Mammary epithelial cell (primary cell): ENCODE measurements at regions of chr1 and their contacts with region 1.

Region 1: DNA sequence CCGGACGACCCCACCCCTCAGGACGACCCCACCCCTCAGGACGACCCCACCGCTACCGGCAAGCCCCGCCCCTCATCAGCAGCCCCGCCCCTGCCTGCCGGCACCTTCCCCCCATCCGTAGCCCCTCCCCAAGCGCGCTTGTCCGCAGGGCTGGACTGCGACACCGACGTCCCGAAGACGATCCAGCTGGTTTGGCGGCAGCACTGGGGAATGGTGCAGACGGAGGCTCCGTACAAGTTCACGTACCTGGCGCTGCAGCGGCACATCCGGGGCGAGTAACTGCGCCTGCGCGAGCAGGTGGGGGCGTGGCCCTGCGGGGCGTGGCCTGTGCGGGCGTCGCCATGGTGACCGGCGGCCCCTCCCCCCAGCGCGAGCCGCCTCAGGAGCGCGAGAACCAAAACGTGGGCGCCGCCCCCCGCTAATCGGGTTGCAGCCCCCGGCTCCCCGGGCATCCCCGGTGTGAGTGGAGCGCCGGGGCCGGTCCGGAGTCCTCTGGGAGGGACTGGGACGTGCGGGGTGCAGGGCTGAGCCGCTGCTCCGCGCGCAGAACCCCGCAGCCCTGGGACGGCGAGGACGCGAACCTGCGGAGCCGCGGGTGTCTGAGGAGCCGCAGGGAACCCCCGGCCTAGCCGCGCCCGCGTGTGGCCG is 4.9 kb downstream of the RNF223 start:
- DNase-seq: peak; percentile 69
- H3K4me3 ChIP-seq: peak overlapping the region in 2 of 3 experiments; percentile 50 to 69
- H3K27ac ChIP-seq: no peak overlapping the region
- H3K4me1 ChIP-seq: peaks cover 25% of the 10 kb centered on the region
- H3K27me3 ChIP-seq: no peaks in the 10 kb centered on the region
- CTCF ChIP-seq: no peak

Region 2: DNA sequence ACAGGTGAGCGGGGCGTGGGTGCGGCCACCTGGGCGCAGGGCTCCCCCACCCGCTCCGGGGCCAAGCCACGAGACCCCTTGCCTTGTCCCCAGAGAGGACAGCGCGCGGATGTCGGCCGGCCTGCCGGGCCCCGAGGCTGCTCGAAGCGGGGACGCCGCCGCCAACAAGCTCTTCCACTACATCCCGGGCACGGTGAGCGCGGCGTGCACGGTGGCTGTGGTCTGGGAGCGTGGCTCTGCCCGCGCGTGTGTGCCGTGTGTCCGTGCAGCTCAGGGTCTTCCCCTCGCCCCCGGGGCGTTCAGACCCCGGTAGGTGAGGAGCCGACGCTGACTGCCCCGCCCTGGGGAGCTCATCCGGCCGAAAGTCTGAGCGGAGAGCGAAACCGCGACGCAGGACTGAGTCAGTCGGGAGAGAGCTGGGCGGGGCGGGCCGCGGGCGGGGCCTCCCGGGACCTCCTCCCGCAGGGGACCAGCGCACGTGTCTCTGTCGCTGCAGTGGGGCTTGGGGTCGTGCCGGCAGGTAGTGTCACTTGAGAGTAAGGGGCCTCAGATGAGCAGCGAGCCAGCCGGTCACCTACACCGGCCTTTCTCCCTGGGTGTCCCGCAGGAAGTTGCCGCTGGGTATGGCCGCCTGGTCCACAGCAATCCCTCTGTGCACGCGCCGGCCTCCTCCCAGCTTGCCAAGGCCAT is 102.4 kb before region 1 on chr1:
- CTCF ChIA-PET with region 1: no interaction called
- dilution Hi-C with region 1: loop called (anchors 5 kb)
- in situ Hi-C with region 1: no loop called
- intact Hi-C with region 1: no loop called
- DNase-seq: peak; percentile 90
- H3K4me3 ChIP-seq: peak overlapping the region; percentile 43 to 70 (median 59)
- H3K27ac ChIP-seq: peak overlapping the region; percentile 97
- H3K4me1 ChIP-seq: peaks cover 29% of the 10 kb centered on the region
- H3K27me3 ChIP-seq: no peaks in the 10 kb centered on the region
- CTCF ChIP-seq: no peak

Region 3: DNA sequence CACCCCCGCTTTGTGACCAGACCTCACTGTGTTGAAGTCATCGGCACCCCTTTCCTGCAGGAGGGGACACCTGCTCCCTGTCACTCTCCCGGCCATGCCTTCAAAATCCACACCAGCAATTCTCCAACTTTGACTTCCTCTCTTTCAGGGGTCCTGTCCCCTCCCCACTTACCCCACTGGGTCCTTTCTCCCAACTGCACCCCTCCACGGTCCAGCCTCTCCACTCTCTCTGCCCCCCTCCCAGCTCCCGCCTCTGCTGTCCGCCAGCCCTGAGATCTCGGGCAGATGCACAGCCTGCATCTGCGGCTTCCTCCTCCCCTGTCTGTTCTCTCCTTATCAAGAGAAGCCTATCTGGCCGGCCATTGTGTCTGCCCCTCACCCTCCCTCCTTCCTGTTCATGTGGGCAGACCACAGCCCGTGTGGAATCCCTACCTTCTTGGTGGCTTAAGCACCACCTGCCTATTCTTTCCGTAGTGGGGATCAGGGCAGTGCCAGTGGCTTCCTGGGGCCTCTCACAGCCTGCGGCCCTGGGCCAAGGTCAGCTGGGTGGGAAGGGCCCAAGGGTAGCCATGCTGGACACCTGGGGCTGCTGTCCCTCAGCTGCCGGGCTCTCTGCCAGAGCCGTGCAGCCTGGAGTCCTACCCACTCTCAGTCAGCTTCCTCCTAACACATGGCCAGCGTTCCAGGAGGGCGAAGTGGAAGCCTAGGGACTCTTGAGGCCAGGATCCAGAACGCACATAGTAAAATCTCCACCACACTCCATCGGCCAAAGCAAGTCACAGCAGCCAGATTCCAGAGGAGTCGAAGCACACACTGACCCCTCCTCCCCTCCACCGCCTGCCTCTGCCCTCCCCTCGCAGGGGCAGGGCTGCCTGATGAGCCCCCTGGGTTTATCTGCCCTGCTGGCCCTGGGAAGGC is 64.1 kb before region 1 on chr1:
- CTCF ChIA-PET with region 1: interaction called, 4 read pairs
- dilution Hi-C with region 1: loop called (anchors 5 kb)
- in situ Hi-C with region 1: no loop called
- intact Hi-C with region 1: no loop called
- DNase-seq: no peak
- H3K4me3 ChIP-seq: no peak overlapping the region
- H3K27ac ChIP-seq: no peak overlapping the region
- H3K4me1 ChIP-seq: peaks cover 9% of the 10 kb centered on the region
- H3K27me3 ChIP-seq: peaks cover 1% of the 10 kb centered on the region
- CTCF ChIP-seq: no peak

Region 4: GRCh38 chr1:1144843-1145546 is 75.8 kb after region 1 on chr1:
- CTCF ChIA-PET with region 1: no interaction called
- dilution Hi-C with region 1: loop called (anchors 5 kb)
- in situ Hi-C with region 1: no loop called
- intact Hi-C with region 1: no loop called
- DNase-seq: no peak
- H3K4me3 ChIP-seq: no peak overlapping the region
- H3K27ac ChIP-seq: no peak overlapping the region
- H3K4me1 ChIP-seq: peaks cover 5% of the 10 kb centered on the region
- H3K27me3 ChIP-seq: no peaks in the 10 kb centered on the region
- CTCF ChIP-seq: no peak

Region 5: GRCh38 chr1:1173793-1174415 is 104.7 kb after region 1 on chr1 and contains the start of gene TTLL10:
- CTCF ChIA-PET with region 1: no interaction called
- dilution Hi-C with region 1: loop called (anchors 5 kb)
- in situ Hi-C with region 1: no loop called
- intact Hi-C with region 1: no loop called
- DNase-seq: no peak
- H3K4me3 ChIP-seq: no peak within 1 kb of the TSS
- H3K27ac ChIP-seq: no peak within 1 kb of the TSS
- H3K4me1 ChIP-seq: peaks cover 8% of the 10 kb centered on the region
- H3K27me3 ChIP-seq: peaks cover 3% of the 10 kb centered on the region
- CTCF ChIP-seq: no peak
- total RNA-seq, gene TTLL10: not detected

Region 6: GRCh38 chr1:1358433-1359261 is 289.5 kb after region 1 on chr1 and contains the start of gene MXRA8:
- CTCF ChIA-PET with region 1: no interaction called
- dilution Hi-C with region 1: no loop called
- in situ Hi-C with region 1: no loop called
- intact Hi-C with region 1: no loop called
- DNase-seq: no peak
- H3K4me3 ChIP-seq: no peak within 1 kb of the TSS
- H3K27ac ChIP-seq: no peak within 1 kb of the TSS
- H3K4me1 ChIP-seq: peaks cover 40% of the 10 kb centered on the region
- H3K27me3 ChIP-seq: no peaks in the 10 kb centered on the region
- CTCF ChIP-seq: no peak
- total RNA-seq, gene MXRA8: 6.2 TPM in 1 of 2 donors, not detected in the other